Heart right ventricle (tissue), 16 donors: ENCODE measurements at regions of chr1 and their contacts with region 1.

Region 1: DNA sequence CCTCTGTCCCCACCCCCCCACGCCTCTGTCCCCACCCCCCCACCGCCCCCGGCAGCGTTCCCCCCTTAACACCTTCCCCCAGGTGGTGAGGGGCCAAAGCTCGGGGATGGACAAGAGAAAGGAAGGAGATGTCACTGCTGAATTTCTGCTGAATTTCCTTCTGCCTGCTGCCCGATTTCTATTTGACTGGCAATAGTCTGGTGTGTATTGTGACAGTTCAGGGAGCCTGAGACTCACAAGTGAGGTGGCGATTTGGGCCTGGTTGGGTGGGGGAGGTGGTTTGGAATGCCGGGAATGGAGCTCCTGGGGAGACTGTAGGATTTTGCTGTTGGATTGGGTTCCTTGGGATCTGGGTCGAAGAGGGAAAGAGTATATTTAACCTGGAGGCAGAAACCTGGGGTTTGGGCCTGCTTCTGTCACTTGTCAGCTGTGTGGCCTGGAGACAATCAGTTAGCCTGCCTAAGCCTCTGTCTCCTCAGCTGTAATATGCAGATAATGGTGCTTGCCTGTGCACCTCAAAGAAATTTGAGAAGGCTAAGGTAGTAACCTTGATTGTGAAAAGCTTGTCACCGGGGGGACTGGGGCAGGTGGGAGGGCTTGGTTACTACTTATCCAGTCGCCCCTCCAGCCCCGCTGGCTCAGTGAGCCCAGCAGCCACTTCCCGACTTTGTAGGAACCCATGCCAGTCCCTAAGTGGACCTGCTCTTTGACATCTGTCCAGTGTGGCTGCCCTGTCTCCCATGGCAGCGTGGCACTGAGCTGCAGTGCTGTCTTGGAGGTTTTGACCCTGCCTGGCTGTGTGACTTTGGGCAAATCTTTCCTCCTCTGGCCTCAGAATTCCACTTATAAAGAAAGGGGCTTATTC is 7.7 kb upstream of the LMNA start:
- DNase-seq: peak in 1 of 2 donors; percentile 54
- ATAC-seq: peak in 3 of 8 donors; percentile 1 to 36 (median 30)
- H3K4me3 ChIP-seq: peak overlapping the region in 8 of 10 donors; percentile 12 to 54 (median 48)
- H3K27ac ChIP-seq: peak overlapping the region; percentile 80 to 98 (median 95)
- H3K4me1 ChIP-seq: peaks cover 44 to 74% (median 63%) of the 10 kb centered on the region in 9 donors
- H3K27me3 ChIP-seq: no peaks in the 10 kb centered on the region
- CTCF ChIP-seq: no peak

Region 2: DNA sequence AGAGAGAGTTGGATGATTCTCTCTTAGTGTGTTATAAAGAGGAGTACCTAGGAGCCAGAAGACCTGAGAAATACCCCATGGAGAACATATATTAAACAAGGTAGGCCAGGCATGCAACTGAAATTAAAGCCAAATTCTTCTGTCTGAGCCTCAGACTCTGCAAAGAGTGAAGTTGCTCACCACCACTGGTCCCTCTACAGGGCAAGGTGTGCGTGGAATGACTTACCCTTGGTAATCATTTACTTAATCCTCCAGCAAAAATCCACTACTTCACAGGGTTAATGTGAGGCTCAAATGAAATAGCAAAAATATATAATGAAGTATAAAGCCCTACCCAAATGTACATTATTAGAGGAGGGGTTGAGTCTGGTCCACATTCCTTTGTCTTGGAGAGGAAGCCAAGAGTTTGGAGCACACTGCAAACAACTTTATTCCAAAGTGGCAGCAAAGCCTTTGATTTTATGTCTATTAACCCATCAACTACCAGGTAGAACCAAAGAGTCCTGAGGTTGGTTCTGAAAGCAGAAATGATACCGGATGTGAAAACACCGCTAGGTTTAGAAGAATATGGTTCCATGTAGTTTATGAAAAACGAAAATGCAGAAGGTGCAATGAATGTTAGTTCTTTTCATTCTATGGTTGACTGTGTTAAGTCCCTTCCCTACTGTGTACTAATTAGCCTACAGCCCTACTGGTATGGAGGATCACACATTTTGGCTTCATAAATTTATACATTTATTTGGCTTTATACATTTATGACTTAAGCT is 94.6 kb before region 1 on chr1:
- intact Hi-C with region 1: no loop called
- DNase-seq: no peak
- ATAC-seq: no peak
- H3K4me3 ChIP-seq: no peak overlapping the region
- H3K27ac ChIP-seq: no peak overlapping the region
- H3K4me1 ChIP-seq: no peaks in the 10 kb centered on the region
- H3K27me3 ChIP-seq: no peaks in the 10 kb centered on the region
- CTCF ChIP-seq: no peak

Region 3: DNA sequence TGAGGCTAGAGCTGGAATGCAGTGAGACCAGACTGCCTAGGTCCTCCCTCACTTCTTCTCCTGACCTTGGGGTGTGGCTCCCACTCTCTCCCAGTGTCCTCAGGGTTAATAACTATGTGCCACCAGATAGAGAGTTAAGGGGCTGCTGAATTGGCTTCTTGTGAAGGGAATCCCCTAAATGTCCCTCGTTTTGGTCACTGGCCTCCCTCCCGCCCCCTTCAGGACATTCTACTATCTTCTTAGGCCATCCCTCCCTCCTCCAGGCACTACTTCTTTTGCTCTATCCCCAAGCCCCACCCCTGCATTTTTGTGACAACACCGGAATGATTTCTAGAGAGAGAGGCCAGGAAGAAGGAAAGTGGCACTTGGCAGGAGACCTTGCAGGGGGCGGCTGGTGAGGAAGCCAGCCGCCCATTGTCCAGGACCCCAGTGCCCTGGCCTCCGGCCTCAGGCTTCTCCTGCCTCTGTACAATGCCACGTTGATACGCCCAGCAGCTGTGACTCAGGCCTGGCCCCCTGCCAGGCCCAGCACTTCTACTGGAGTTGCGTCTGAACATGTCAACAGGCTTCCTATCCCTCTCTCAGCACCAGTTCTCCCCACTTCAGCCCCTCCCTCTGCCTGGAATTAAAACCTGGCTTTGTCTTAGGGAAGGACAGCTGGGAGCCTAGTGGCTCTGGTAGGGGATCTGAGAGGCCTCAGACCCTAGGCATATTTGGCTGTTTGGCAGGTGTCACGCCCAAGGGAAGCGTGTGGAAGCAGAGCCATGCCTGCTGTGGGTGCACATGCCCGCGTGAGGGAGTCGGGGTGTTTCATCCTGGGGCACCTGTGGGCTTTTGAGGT is 16.7 kb after region 1 on chr1:
- intact Hi-C with region 1: loop called in 1 of 10 experiments (anchors 2 kb)
- DNase-seq: peak; percentile 96
- ATAC-seq: peak; percentile 71 to 87 (median 80)
- H3K4me3 ChIP-seq: peak overlapping the region in 9 of 10 donors; percentile 18 to 99 (median 86)
- H3K27ac ChIP-seq: peak overlapping the region; percentile 90 to 100 (median 98)
- H3K4me1 ChIP-seq: peaks cover 66 to 100% (median 99%) of the 10 kb centered on the region in 9 donors
- H3K27me3 ChIP-seq: no peaks in the 10 kb centered on the region
- CTCF ChIP-seq: peak in 5 of 9 donors; percentile 29 to 54 (median 33)

Region 4: DNA sequence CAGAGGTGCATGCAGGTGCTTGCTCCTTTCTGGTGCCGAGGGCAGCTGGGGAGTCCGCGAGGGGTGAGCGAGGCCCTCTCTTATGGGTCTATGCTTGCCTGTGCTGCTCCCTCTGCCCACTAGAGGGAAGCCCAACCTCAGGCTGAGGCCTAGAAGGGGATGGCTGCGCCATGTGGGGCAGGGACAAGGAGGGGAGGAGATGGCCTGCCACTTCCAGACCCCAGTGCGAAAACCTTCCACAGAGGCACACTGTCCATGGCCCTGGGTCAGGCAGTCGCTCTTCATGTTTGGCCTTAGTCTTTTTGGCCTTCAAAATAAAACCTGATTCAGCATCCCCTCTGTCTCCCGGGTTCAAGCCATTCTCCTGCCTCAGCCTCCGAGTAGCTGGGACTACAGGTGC is 276.2 kb after region 1 on chr1:
- intact Hi-C with region 1: no loop called
- DNase-seq: peak; percentile 51 to 55
- ATAC-seq: peak; percentile 71 to 93 (median 80)
- H3K4me3 ChIP-seq: no peak overlapping the region
- H3K27ac ChIP-seq: no peak overlapping the region
- H3K4me1 ChIP-seq: peaks cover 0 to 4% (median 0%) of the 10 kb centered on the region in 9 donors
- H3K27me3 ChIP-seq: peaks cover 0 to 24% (median 22%) of the 10 kb centered on the region in 7 donors
- CTCF ChIP-seq: peak; percentile 52 to 83 (median 77)